Mammary epithelial cell (primary cell): ENCODE measurements at regions of chr18 and their contacts with region 1.

Region 1: GRCh38 chr18:74310411-74310810 is 5.2 kb upstream of the C18orf63 start:
- DNase-seq: peak; percentile 65
- H3K4me3 ChIP-seq: no peak overlapping the region
- H3K27ac ChIP-seq: no peak overlapping the region
- H3K4me1 ChIP-seq: peaks cover 7% of the 10 kb centered on the region
- H3K27me3 ChIP-seq: no peaks in the 10 kb centered on the region
- CTCF ChIP-seq: peak; percentile 56 to 64

Region 2: DNA sequence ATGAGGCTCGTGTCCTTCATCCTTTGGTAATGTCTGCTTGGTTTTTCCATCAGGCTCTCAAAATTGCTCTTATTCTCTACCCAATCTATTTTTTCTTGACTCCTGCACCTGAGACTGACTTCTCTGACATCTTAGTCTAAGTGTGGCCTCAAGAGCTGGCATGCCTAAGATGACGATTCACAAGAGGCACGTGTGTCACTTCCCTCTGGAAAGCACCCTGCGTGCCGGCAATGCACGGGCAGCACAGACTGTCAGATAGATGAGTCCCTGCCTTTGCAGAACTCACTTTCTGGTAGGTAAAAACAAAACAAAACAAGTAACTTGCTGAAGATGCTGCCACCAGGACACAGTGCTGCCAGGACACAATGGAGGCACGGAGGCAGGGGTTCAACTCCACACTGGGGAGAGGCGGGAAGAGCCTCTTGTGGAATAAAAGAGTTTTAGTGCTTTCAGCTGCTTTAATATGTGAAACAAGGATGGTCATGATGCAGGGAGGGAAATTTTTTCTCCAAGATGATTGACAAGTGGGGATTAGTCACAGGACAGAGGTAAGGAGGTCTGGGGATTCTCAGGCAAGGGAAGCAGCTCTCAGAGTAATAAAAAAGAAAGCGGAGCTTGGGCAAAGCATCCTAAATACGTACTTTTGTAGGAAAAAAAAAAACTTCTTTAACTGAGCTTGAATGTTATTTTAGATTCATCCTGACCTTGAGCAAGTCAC is 45.9 kb before region 1 on chr18:
- CTCF ChIA-PET with region 1: no interaction called
- dilution Hi-C with region 1: loop called (anchors 5 kb)
- in situ Hi-C with region 1: no loop called
- intact Hi-C with region 1: no loop called
- DNase-seq: no peak
- H3K4me3 ChIP-seq: no peak overlapping the region
- H3K27ac ChIP-seq: no peak overlapping the region
- H3K4me1 ChIP-seq: no peaks in the 10 kb centered on the region
- H3K27me3 ChIP-seq: no peaks in the 10 kb centered on the region
- CTCF ChIP-seq: no peak

Region 3: GRCh38 chr18:74331404-74331803 is 21.0 kb after region 1 on chr18:
- CTCF ChIA-PET with region 1: no interaction called
- dilution Hi-C with region 1: no loop called
- in situ Hi-C with region 1: no loop called
- intact Hi-C with region 1: loop called (anchors 1 kb)
- DNase-seq: peak; percentile 32
- H3K4me3 ChIP-seq: no peak overlapping the region
- H3K27ac ChIP-seq: no peak overlapping the region
- H3K4me1 ChIP-seq: no peaks in the 10 kb centered on the region
- H3K27me3 ChIP-seq: no peaks in the 10 kb centered on the region
- CTCF ChIP-seq: peak; percentile 49 to 68